ENCODE measurements at regions of chr6 and their contacts with region 1.

Region 1: GRCh38 chr6:38307740-38308139 is 332.0 kb downstream of the BTBD9 start:
- DNase-seq: no peak
- ATAC-seq: no peak
- H3K4me3 ChIP-seq: no peak overlapping the region
- H3K27ac ChIP-seq: no peak overlapping the region
- H3K4me1 ChIP-seq: peaks cover 26% of the 10 kb centered on the region
- H3K27me3 ChIP-seq: no peaks in the 10 kb centered on the region
- CTCF ChIP-seq: no peak

Region 2: GRCh38 chr6:38057994-38058393 is 249.7 kb before region 1 on chr6:
- CTCF ChIA-PET with region 1: no interaction called
- POLR2A ChIA-PET with region 1: no interaction called
- intact Hi-C with region 1: no loop called
- DNase-seq: peak; percentile 58
- ATAC-seq: peak; percentile 84
- H3K4me3 ChIP-seq: no peak overlapping the region
- H3K27ac ChIP-seq: peak overlapping the region; percentile 18; the same call in 1 of the 2 replicates
- H3K4me1 ChIP-seq: peaks cover 17% of the 10 kb centered on the region
- H3K27me3 ChIP-seq: no peaks in the 10 kb centered on the region
- CTCF ChIP-seq: no peak

Region 3: DNA sequence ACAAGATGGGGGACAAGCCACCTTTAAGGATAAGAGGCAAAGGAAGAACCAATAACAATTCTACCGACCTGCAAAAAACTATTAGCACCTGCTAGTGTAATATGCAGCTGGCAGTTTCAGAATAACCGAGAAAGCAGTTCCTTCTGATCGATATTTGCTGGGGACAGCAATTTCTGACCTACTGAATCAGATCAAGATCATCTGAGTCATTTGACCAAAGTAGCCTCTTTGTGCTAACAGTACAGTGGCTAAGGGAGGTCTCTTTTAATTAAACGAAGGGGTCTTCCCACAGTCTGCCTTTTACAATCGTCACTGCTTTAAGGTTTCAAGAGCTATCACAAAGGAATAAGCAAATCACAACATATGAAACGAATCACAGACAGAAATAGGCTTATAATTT is 13.1 kb after region 1 on chr6:
- CTCF ChIA-PET with region 1: no interaction called
- POLR2A ChIA-PET with region 1: no interaction called
- intact Hi-C with region 1: loop called (anchors 2 kb)
- DNase-seq: no peak
- ATAC-seq: no peak
- H3K4me3 ChIP-seq: no peak overlapping the region
- H3K27ac ChIP-seq: no peak overlapping the region
- H3K4me1 ChIP-seq: peaks cover 8% of the 10 kb centered on the region
- H3K27me3 ChIP-seq: no peaks in the 10 kb centered on the region
- CTCF ChIP-seq: no peak

Measured in PC-3 (cell line).